Activated T-helper 1 cell treated with anti-CD3 and anti-CD28 coated beads, Interleukin-12 subunit alpha, Interleukin-12 subunit beta, Interleukin-2, Interleukin-4 antibody, amounts not matched to agents 30 ng/mL and 10 ng/mL and 1 ng/mL, durations not matched to agents 14 hours and 24 hours and 36 hours (primary cell): ENCODE measurements at regions of chr2 and their contacts with region 1.

Region 1: GRCh38 chr2:237122214-237122666 is 36.6 kb downstream of the COPS8 start:
- DNase-seq: peak; percentile 11
- H3K4me3 Mint-ChIP-seq: no peak overlapping the region
- H3K27ac Mint-ChIP-seq: no peak overlapping the region
- H3K4me1 Mint-ChIP-seq: no peaks in the 10 kb centered on the region
- H3K27me3 Mint-ChIP-seq: peaks cover 4% of the 10 kb centered on the region

Region 2: DNA sequence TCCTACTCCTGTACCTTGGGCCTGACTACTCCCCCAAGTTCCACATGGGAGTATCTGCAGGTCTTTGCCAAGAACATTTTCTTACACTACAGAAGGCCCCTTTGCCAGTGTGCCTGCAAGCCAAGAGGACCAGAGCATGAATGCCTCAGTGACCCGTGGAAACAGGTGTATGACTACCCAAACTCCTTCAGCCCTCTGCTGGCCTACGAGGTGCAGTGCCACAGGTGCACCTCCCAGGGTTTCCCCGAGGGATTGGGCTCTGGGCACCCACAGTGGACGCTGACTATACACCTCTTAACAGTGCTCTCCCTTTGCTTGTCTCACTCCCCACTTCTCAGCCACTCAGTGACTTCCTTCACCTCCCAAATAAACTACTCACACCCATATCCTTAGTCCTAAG is 200.3 kb after region 1 on chr2:
- intact Hi-C with region 1: loop called (anchors 1 kb)
- DNase-seq: no peak
- H3K4me3 Mint-ChIP-seq: no peak overlapping the region
- H3K27ac Mint-ChIP-seq: no peak overlapping the region
- H3K4me1 Mint-ChIP-seq: no peaks in the 10 kb centered on the region
- H3K27me3 Mint-ChIP-seq: no peaks in the 10 kb centered on the region

Region 3: DNA sequence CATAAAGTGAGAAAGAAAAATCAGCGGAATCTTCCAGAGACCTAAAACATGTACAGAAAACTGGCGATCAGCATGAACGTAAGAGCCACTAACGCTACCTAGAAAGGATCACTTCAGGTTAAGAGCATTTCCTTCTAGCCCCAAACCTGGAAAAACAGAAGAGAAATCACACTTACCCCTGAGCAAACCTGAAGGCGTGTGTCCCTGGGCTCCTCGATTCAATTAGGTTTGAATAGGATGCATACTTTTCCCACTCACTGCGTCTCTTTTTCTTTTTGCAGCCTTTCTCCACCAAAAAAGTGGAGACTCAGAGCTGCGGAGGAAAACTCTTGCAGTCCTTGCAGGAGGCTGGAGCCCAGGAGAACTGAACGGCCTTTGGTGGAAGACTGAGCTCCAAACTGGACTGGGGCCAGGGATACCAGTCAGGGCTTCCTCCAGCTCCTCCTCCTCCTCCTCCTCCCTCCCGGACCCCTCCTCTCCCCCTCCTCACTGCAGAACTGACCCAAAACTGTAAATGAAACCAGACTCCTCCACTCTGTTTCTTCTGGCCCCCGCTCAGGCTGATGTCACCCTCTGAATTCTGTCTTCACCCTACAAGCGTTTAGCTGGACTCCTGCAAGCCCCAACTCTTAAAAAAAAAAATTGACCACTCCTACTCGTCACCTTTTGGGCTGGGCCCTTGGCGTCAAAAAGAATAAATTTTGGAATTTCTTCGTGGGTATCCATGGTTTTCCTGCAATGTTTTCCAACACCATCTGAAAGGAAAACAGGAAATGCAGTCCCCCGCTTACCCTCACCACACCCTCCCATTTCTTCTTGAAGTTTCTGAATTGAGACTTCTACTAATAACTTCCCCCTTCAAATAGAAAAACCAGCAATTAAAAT is 291.8 kb after region 1 on chr2 and contains the start of gene COL6A3:
- intact Hi-C with region 1: loop called (anchors 1 kb)
- DNase-seq: no peak
- H3K4me3 Mint-ChIP-seq: no peak within 1 kb of the TSS
- H3K27ac Mint-ChIP-seq: no peak within 1 kb of the TSS
- H3K4me1 Mint-ChIP-seq: no peaks in the 10 kb centered on the region
- H3K27me3 Mint-ChIP-seq: peaks cover 20% of the 10 kb centered on the region
- total RNA-seq, gene COL6A3: 13.1 and 15.5 TPM in 2 replicates

Region 4: GRCh38 chr2:237512774-237513466 is 390.7 kb after region 1 on chr2:
- intact Hi-C with region 1: loop called (anchors 1 kb)
- DNase-seq: peak; percentile 57
- H3K4me3 Mint-ChIP-seq: no peak overlapping the region
- H3K27ac Mint-ChIP-seq: no peak overlapping the region
- H3K4me1 Mint-ChIP-seq: no peaks in the 10 kb centered on the region
- H3K27me3 Mint-ChIP-seq: peaks cover 3% of the 10 kb centered on the region